Activated CD4-positive, alpha-beta memory T cell treated with anti-CD3 and anti-CD28 coated beads for 36 hours (primary cell): ENCODE measurements at regions of chr5 and their contacts with region 1.

Region 1: GRCh38 chr5:80083101-80083890 is 48.1 kb downstream of the THBS4 start:
- DNase-seq: peak; percentile 31
- H3K4me3 Mint-ChIP-seq: peak overlapping the region; percentile 54
- H3K27ac Mint-ChIP-seq: peak overlapping the region; percentile 50
- H3K4me1 Mint-ChIP-seq: peaks cover 11% of the 10 kb centered on the region
- H3K27me3 Mint-ChIP-seq: no peaks in the 10 kb centered on the region

Region 2: DNA sequence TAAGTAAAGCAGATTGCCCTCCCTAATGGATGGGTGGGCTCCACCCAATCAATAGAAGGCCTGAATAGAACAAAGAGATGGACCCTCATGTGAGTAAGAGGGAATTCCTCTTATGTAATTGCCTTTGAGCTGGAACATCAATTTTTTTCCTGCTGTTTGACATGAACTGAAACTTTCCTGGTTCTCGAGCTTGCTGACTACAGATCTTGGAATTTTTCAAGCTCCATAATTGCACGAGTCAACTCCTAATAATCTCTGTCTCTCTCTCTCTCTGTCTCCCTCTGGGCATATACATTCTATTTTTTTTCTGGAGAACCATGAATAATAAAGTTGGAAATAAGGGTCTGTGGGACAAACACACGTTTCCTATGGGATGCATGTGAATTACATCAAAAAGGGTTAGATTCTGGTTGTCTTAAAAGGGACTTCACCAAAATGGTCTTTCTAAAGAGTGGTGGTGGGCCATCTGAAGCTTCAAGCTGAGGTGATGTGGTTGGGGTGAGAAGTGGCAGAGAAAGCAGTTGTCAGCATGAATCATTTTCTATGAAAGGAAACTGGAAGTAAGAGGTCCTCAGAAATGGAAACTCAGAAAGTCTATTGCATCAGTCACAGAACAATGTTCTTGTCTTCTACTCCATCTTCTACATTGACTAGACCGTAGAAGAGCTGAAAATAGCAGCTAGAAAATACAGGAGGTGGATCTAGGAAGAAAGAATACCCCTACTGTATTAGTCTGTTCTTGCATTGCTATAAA is 522.3 kb before region 1 on chr5:
- CTCF ChIA-PET with region 1: interaction called, 20 read pairs
- POLR2A ChIA-PET with region 1: no interaction called
- intact Hi-C with region 1: no loop called
- DNase-seq: peak; percentile 51
- H3K4me3 Mint-ChIP-seq: peak overlapping the region; percentile 30
- H3K27ac Mint-ChIP-seq: peak overlapping the region; percentile 99
- H3K4me1 Mint-ChIP-seq: peaks cover 42% of the 10 kb centered on the region
- H3K27me3 Mint-ChIP-seq: peaks cover 1% of the 10 kb centered on the region

Region 3: DNA sequence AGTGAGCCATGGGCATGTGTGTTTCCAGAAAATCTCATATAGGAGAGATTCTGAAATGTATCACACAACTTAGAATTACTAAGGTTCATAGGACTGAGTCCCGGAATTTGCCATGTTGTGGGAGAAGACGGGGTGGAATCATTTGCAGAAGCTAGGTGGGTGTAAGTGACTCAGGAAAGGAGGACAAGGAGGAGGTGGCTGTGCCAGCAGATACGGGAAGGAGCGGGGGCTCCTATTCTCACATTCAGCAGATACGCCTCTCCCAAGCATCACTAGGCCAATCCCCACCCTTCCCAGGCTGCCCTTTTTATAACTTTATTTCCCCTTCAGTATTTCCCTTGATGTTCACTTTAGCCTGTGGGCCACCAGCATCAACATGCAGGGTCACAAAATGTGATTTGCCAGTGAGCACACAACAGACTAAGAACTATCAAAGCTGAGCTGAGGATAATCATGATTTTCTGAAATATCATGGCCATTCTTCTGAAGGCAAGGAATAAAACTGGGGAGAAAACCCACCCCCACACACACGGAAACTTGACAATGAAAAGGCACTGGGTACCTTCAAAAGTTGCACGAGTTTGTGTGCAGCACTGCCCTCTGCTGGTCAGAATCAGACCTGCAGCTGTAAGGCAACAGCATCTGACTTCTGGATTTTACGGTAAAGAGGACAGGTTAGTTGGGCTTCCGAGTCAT is 225.4 kb before region 1 on chr5:
- CTCF ChIA-PET with region 1: interaction called, 34 read pairs
- POLR2A ChIA-PET with region 1: no interaction called
- intact Hi-C with region 1: loop called (anchors 1 kb)
- DNase-seq: peak; percentile 87
- H3K4me3 Mint-ChIP-seq: no peak overlapping the region
- H3K27ac Mint-ChIP-seq: no peak overlapping the region
- H3K4me1 Mint-ChIP-seq: peaks cover 3% of the 10 kb centered on the region
- H3K27me3 Mint-ChIP-seq: peaks cover 3% of the 10 kb centered on the region

Region 4: DNA sequence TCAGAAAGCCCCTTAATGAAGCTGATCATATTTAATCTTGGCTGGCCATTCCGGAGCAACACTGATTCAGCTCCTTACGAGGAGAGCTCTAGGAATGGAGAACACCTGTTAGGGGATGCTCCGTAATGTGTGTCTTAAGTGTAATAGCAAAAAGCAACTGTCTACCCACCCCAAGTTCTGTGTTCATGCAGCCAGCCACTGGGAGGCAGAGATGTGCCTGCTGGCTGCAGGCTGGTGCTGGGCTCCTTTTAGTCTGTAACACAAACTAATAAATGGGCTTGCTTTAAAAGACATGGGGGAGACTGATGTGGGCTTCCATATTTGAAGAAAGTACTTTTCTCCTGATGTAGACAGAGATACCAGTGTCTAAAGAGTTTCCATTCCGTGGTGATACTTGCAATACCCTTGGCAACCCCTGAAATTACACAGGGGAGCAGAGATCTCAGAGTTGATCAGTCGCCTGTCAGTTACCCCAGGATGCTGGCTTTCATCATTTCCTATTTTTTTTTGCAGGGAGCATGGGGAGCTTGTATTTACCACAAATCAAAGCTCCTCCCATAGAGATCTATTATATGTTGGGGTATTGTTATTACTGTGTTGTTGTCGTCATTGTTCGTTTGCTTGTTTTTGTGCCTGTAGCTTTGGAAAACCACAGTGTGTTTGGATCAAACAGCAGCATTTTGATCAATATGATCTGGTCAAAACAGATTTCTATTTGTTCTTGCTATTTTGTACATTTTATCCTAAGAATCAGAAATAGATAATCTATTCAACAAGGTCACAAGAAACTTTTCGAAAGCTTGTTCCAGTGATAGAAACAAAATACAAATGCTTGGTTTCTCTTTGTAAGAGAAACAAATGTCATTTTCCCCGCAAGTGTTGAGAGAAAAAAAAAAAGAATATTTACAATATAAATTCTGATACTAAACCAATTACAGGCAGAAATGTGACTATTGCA is 158.1 kb before region 1 on chr5:
- CTCF ChIA-PET with region 1: interaction called, 64 read pairs
- POLR2A ChIA-PET with region 1: no interaction called
- intact Hi-C with region 1: loop called (anchors 1 kb)
- DNase-seq: peak; percentile 34
- H3K4me3 Mint-ChIP-seq: no peak overlapping the region
- H3K27ac Mint-ChIP-seq: no peak overlapping the region
- H3K4me1 Mint-ChIP-seq: no peaks in the 10 kb centered on the region
- H3K27me3 Mint-ChIP-seq: peaks cover 4% of the 10 kb centered on the region

Region 5: GRCh38 chr5:80072103-80073073 is 10.9 kb before region 1 on chr5:
- CTCF ChIA-PET with region 1: interaction called, 18 read pairs
- POLR2A ChIA-PET with region 1: no interaction called
- intact Hi-C with region 1: no loop called
- DNase-seq: no peak
- H3K4me3 Mint-ChIP-seq: no peak overlapping the region
- H3K27ac Mint-ChIP-seq: no peak overlapping the region
- H3K4me1 Mint-ChIP-seq: no peaks in the 10 kb centered on the region
- H3K27me3 Mint-ChIP-seq: no peaks in the 10 kb centered on the region

Region 6: DNA sequence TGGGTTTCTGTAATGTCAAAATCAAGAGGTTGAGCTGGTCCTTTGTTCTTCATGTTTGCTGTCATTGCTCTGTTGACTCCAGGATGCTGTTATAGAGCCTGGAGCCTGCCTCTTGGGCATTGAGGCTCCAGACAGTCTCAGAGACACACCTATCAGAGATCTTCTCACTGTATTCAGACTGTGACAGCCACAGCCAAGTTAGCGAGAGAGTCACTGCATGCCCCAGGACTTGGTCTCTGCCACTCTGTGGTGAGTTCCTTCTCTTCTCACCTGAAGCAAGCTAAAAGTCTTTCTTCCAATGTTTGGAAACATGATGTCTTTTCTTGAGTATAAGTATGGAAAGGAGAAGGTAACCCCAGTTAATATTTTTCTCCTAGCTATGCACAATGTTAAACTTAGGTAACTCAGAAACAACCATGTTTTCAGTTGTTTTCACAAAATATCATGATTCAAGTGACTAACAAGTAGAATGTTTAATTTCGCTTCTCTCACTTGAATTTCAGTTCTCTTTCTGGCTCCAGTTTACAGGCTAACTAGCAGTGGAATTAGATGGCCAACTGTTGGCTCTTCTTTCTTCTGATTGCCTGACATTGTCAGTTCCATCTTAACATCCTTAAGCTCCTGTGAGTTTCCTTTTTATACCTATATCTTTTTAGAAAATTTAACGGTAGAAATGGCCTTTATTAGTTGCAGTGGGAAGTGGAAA is 303.9 kb after region 1 on chr5:
- CTCF ChIA-PET with region 1: no interaction called
- POLR2A ChIA-PET with region 1: no interaction called
- intact Hi-C with region 1: no loop called
- DNase-seq: no peak
- H3K4me3 Mint-ChIP-seq: no peak overlapping the region
- H3K27ac Mint-ChIP-seq: no peak overlapping the region
- H3K4me1 Mint-ChIP-seq: no peaks in the 10 kb centered on the region
- H3K27me3 Mint-ChIP-seq: peaks cover 18% of the 10 kb centered on the region